ENCODE measurements at regions of chr6 and their contacts with region 1.

Region 1: GRCh38 chr6:165274611-165275010 is 34.8 kb downstream of the C6orf118 start:
- DNase-seq: no peak
- H3K4me3 ChIP-seq: no peak overlapping the region
- H3K27ac ChIP-seq: no peak overlapping the region
- H3K4me1 ChIP-seq: no peaks in the 10 kb centered on the region
- H3K27me3 ChIP-seq: no peaks in the 10 kb centered on the region

Region 2: DNA sequence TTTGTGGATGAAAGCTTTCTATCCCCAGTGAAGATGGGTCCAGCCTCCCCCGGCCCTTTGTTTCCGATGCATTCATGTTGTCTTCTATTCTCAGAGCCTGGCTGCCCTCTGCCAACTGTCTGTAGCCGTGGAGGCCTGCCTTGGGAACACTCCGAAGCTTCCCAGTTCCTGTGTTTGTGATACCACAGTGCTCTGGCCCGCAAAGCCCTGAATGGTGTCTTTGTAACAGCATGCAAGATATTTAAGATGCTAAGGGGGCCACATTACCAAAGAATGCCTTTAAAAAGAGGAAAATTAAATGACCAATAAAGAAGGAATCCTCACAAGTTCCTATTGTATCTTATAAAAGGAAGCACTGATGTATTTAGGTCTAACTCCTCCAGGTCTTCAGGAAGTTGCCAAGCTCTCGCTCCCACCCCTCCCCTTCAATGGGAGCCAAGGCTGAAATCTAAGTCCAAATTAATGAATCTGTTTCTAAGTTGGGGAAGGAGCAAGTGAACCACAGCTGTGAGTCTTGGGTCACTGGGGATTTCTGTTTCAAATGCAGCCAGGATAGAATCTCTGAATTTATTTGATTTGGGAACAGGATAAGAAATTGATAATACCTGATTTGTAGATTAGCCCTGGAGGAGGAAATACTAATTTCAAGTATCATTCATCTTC is 1264.0 kb before region 1 on chr6:
- in situ Hi-C with region 1: loop called (anchors 25 kb)
- DNase-seq: no peak
- H3K4me3 ChIP-seq: no peak overlapping the region
- H3K27ac ChIP-seq: no peak overlapping the region
- H3K4me1 ChIP-seq: no peaks in the 10 kb centered on the region
- H3K27me3 ChIP-seq: no peaks in the 10 kb centered on the region

Region 3: GRCh38 chr6:165376100-165376499 is 101.5 kb after region 1 on chr6:
- in situ Hi-C with region 1: no loop called
- DNase-seq: no peak
- H3K4me3 ChIP-seq: no peak overlapping the region
- H3K27ac ChIP-seq: no peak overlapping the region
- H3K4me1 ChIP-seq: no peaks in the 10 kb centered on the region
- H3K27me3 ChIP-seq: no peaks in the 10 kb centered on the region